ENCODE measurements at regions of chr5 and their contacts with region 1.

Region 1: DNA sequence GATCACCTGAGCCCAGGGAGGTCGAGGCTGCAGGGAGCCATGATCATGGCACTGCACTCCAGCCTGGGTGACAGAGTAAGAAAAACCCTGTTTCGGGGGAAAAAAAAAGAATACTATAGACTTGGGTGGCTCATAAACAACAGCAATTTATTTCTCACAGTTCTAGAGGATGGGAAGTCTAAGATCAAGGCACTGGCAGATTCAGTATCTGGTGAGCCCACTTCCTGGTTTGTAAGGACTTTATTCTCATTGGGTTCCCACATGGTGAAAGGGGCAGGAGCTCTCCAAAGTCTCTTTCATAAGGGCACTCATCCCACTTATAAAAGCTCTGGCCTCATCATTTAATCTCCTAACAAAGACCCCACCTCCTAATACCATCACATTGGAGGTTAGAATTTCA is 8.7 kb downstream of the HINT1 start:
- DNase-seq: no peak
- H3K4me3 ChIP-seq: no peak overlapping the region
- H3K27ac ChIP-seq: no peak overlapping the region
- H3K4me1 ChIP-seq: peaks cover 0 to 20% (median 8%) of the 10 kb centered on the region in 4 donors
- H3K27me3 ChIP-seq: no peaks in the 10 kb centered on the region
- CTCF ChIP-seq: no peak
- EP300 ChIP-seq: no peak
- POLR2A ChIP-seq: no peak

Region 2: GRCh38 chr5:131423056-131423455 is 266.7 kb after region 1 on chr5:
- intact Hi-C with region 1: loop called (anchors 10 kb)
- DNase-seq: peak in 1 of 2 donors; percentile 23
- H3K4me3 ChIP-seq: no peak overlapping the region
- H3K27ac ChIP-seq: no peak overlapping the region
- H3K4me1 ChIP-seq: no peaks in the 10 kb centered on the region
- H3K27me3 ChIP-seq: no peaks in the 10 kb centered on the region
- CTCF ChIP-seq: peak in 1 of 7 experiments; percentile 6
- EP300 ChIP-seq: no peak
- POLR2A ChIP-seq: no peak